AG04449 (cell line): ENCODE measurements at regions of chr9 and their contacts with region 1.

Region 1: GRCh38 chr9:131046581-131047202 is 37.7 kb downstream of the LAMC3 start:
- DNase-seq: no peak
- H3K4me3 ChIP-seq: no peak overlapping the region
- CTCF ChIP-seq: peak; percentile 97

Region 2: GRCh38 chr9:130701056-130702022 is 345.4 kb before region 1 on chr9:
- CTCF ChIA-PET with region 1: interaction called, 52 read pairs
- POLR2A ChIA-PET with region 1: no interaction called
- DNase-seq: peak; percentile 57
- H3K4me3 ChIP-seq: no peak overlapping the region
- CTCF ChIP-seq: peak; percentile 95

Region 3: GRCh38 chr9:130712564-130713285 is 334.0 kb before region 1 on chr9:
- CTCF ChIA-PET with region 1: interaction called, 27 read pairs
- POLR2A ChIA-PET with region 1: no interaction called
- DNase-seq: peak; percentile 88
- H3K4me3 ChIP-seq: peak overlapping the region; percentile 79
- CTCF ChIP-seq: no peak

Region 4: DNA sequence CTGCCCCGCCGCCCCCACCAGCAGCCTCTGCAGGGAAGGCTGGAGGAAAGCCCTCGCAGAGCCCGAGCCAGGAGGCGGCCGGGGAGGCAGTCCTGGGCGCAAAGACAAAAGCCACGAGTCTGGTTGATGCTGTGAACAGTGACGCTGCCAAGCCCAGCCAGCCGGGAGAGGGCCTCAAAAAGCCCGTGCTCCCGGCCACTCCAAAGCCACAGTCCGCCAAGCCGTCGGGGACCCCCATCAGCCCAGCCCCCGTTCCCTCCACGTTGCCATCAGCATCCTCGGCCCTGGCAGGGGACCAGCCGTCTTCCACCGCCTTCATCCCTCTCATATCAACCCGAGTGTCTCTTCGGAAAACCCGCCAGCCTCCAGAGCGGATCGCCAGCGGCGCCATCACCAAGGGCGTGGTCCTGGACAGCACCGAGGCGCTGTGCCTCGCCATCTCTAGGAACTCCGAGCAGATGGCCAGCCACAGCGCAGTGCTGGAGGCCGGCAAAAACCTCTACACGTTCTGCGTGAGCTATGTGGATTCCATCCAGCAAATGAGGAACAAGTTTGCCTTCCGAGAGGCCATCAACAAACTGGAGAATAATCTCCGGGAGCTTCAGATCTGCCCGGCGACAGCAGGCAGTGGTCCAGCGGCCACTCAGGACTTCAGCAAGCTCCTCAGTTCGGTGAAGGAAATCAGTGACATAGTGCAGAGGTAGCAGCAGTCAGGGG is 161.6 kb before region 1 on chr9:
- CTCF ChIA-PET with region 1: interaction called, 10 read pairs
- POLR2A ChIA-PET with region 1: no interaction called
- DNase-seq: no peak
- H3K4me3 ChIP-seq: no peak overlapping the region
- CTCF ChIP-seq: no peak

Region 5: GRCh38 chr9:130912932-130913598 is 133.6 kb before region 1 on chr9:
- CTCF ChIA-PET with region 1: interaction called, 12 read pairs
- POLR2A ChIA-PET with region 1: no interaction called
- DNase-seq: no peak
- H3K4me3 ChIP-seq: no peak overlapping the region
- CTCF ChIP-seq: no peak

Region 6: DNA sequence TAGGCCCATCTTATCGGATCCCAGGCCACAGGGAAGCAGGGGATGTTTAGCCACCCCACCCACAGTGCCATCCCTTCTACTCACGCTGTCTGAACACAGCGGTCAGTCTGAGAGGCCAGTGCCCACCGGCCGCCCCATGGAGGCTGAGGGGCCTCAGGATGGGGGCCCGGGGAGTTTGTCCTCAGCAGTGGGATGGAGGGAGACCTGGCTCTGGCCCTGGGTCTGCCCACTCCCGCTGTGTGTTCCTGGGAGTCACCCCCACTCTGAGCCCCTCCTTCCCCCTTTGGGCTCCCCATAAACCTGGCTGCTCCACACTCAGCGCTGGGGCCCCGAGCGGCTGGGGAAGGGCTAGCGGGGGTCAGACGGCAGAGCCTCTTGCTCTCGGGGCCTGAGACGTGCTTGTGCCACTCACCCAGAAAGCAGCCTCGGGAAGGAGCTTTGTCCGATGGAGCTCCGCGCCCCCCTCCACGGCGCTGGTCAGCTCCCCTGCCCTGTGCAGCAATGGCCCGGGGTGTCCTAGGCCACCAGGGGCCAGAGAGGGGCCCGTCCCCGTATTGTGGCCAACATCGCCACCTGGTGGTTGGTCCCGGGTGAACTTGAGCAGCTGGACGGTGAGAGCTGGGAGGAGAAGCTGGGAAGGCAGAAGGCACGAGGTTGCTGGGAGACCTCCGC is 48.6 kb before region 1 on chr9:
- CTCF ChIA-PET with region 1: interaction called, 13 read pairs
- POLR2A ChIA-PET with region 1: no interaction called
- DNase-seq: no peak
- H3K4me3 ChIP-seq: no peak overlapping the region
- CTCF ChIP-seq: peak; percentile 83

Region 7: GRCh38 chr9:131018621-131019020 is 28.1 kb before region 1 on chr9:
- CTCF ChIA-PET with region 1: interaction called, 13 read pairs
- POLR2A ChIA-PET with region 1: no interaction called
- DNase-seq: no peak
- H3K4me3 ChIP-seq: no peak overlapping the region
- CTCF ChIP-seq: peak; percentile 8